OCI-LY7 (cell line): ENCODE measurements at regions of chr6 and their contacts with region 1.

Region 1: DNA sequence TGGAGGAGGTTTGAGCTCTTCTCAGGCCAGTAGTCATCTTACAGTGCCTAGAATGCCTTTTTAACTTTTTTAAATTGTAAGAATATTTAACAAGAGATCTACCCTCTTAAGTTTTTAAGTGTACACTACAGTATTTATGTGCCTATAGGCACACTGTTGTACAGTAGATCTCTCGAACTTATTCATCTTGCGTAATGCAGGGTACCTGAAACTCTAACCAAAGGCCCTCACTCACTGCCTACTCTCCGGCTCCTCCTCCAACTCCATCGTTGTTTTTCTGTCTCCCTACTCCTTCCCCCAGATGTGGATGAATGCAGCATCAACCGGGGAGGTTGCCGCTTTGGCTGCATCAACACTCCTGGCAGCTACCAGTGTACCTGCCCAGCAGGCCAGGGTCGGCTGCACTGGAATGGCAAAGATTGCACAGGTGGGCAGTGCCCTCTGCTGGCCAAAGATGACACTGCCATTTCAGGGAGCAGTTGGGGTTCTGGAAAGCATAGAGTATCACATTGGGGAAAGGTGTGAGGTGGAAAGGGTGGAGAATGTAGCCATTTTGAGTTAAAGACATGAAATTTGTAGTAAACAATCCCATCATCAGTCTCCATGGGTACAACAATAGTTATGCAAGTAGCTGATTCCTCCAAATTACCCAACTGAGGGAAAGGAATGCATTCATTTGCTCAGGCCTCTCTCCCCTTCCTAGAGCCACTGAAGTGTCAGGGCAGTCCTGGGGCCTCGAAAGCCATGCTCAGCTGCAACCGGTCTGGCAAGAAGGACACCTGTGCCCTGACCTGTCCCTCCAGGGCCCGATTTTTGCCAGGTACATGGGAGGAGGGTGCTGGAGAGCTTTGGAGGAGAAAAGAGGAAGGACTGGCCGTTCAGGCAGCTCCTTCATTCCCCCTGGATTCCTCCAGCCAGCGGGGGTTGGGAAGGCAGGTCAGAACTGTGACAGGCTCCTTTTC is 18.4 kb upstream of the ZNF76 start:
- DNase-seq: peak; percentile 68
- H3K4me3 ChIP-seq: no peak overlapping the region
- H3K27ac ChIP-seq: no peak overlapping the region
- H3K4me1 ChIP-seq: no peaks in the 10 kb centered on the region
- CTCF ChIP-seq: peak; percentile 99

Region 2: GRCh38 chr6:34986845-34987246 is 254.3 kb before region 1 on chr6:
- CTCF ChIA-PET with region 1: no interaction called
- POLR2A ChIA-PET with region 1: no interaction called
- intact Hi-C with region 1: loop called (anchors 5 kb)
- DNase-seq: peak; percentile 81
- H3K4me3 ChIP-seq: no peak overlapping the region
- H3K27ac ChIP-seq: no peak overlapping the region
- H3K4me1 ChIP-seq: no peaks in the 10 kb centered on the region
- CTCF ChIP-seq: peak; percentile 96

Region 3: GRCh38 chr6:35146453-35146852 is 94.7 kb before region 1 on chr6:
- CTCF ChIA-PET with region 1: interaction called, 3 read pairs
- POLR2A ChIA-PET with region 1: no interaction called
- intact Hi-C with region 1: loop called (anchors 1 kb)
- DNase-seq: peak; percentile 37
- H3K4me3 ChIP-seq: no peak overlapping the region
- H3K27ac ChIP-seq: no peak overlapping the region
- H3K4me1 ChIP-seq: no peaks in the 10 kb centered on the region
- CTCF ChIP-seq: peak; percentile 77

Region 4: DNA sequence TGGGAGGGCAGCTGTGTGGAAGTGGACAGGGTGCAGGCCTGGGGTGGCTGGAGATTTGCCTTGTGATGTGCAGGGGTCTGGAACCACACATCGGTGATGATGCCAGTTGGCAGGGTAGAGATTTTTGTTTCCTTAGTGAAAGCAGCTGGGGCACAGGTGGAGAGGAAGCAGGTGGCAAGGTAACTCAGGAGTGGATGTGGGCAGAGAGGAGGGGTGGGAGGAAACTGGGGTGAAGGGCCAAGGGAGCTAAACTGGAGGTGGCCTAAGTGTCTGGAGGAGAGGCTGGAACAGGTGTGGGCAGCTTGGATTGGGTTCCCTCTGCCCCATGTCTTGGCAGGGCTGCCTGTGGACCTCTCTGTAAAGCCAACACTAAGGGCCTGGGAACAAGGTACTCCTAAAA is 32.0 kb before region 1 on chr6:
- CTCF ChIA-PET with region 1: interaction called, 7 read pairs
- POLR2A ChIA-PET with region 1: interaction called, 3 read pairs
- intact Hi-C with region 1: loop called (anchors 5 kb)
- DNase-seq: peak; percentile 41
- H3K4me3 ChIP-seq: no peak overlapping the region
- H3K27ac ChIP-seq: no peak overlapping the region
- H3K4me1 ChIP-seq: peaks cover 17% of the 10 kb centered on the region
- CTCF ChIP-seq: no peak

Region 5: DNA sequence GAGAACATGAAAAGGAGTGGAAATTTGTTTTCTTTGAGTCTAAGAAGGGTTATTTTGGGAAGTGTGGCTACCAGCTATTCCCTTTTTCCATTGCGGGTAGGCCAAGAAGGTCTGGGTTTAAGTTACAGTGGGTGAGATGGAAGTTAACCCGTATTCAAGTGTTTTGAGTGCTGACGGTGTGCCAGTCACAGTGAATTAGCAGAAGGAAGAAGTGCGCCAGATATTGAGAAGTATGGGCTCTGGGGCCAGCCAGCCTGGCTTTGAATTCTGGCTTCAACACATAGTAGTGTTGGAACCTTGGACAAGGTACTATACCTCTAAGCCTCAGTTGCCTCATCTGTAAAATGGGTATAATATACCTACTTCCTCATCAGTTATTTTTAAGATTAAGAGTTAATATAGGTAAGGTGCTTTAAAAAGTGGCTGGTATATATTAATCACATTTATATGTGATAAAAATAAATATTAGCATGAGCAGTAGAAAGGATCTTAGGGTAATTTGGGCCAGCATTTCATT is 34.7 kb after region 1 on chr6:
- CTCF ChIA-PET with region 1: no interaction called
- POLR2A ChIA-PET with region 1: no interaction called
- intact Hi-C with region 1: no loop called
- DNase-seq: no peak
- H3K4me3 ChIP-seq: no peak overlapping the region
- H3K27ac ChIP-seq: no peak overlapping the region
- H3K4me1 ChIP-seq: no peaks in the 10 kb centered on the region
- CTCF ChIP-seq: no peak

Region 6: GRCh38 chr6:35377002-35377401 is 135.9 kb after region 1 on chr6:
- CTCF ChIA-PET with region 1: no interaction called
- POLR2A ChIA-PET with region 1: no interaction called
- intact Hi-C with region 1: no loop called
- DNase-seq: no peak
- H3K4me3 ChIP-seq: no peak overlapping the region
- H3K27ac ChIP-seq: no peak overlapping the region
- H3K4me1 ChIP-seq: peaks cover 5% of the 10 kb centered on the region
- CTCF ChIP-seq: no peak

Region 7: DNA sequence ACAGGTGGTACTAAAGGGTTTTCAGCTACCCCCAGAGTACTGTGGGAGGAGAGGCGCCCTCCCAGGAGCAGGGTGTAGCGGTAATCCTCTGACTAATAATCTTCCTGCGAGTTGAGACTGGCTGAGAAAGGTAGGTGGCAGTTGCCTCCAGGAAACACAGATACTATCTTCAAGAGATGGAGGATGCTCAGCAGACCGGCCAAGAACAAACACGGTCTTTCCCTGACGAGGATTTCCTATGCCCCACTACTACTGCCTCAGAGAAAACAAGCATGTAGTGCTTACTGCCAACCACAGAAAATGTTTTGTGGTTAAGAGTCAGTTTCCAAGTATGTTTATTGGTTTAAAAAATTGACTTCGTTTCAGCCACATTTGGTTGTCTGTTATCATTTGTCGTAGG is 1671.5 kb after region 1 on chr6:
- CTCF ChIA-PET with region 1: no interaction called
- POLR2A ChIA-PET with region 1: no interaction called
- intact Hi-C with region 1: no loop called
- DNase-seq: no peak
- H3K4me3 ChIP-seq: no peak overlapping the region
- H3K27ac ChIP-seq: no peak overlapping the region
- H3K4me1 ChIP-seq: no peaks in the 10 kb centered on the region
- CTCF ChIP-seq: no peak